Lower lobe of right lung (tissue), 2 donors: ENCODE measurements at regions of chr6 and their contacts with region 1.

Region 1: DNA sequence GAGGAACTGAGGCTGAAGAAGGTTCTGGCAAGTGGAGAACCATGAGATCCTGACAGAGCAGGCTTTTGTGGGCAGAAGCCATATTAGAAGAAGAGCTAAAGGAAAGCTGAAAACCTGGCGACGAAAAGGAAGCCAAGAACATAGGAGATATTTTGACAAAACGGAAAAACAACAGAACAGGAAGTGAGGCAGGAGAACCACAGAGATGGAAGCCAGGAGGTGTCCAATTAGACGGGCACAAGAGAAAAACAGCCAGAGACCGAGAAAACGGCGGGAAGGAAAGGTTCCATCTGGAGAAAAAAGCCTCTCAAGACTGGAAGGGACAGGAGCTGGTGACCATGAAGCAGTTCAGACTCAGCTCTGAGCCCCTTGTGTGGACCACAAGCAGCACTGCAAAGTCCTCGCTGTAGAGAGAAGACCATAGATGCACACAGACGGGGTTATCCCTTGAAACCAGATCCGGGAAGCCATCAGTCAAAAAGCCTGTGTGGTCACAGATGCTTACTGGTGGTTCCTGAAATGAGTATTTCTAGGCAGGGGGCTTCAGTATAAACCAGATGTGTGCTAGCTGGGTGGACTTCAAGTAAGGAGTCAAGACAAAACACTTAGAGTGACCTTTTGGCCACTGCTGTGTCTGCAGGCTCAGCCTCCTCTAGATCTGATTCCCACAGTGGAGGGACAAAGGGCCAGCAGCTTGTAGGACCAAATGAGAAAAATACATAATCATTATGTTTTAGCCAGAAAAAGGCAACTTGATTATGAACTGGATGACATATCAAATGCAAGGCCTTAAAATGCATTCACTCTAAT is 30.7 kb downstream of the SSR1 start:
- DNase-seq: no peak
- ATAC-seq: no peak
- H3K4me3 ChIP-seq: no peak overlapping the region
- H3K27ac ChIP-seq: no peak overlapping the region
- H3K4me1 ChIP-seq: peaks cover 6% of the 10 kb centered on the region
- H3K27me3 ChIP-seq: no peaks in the 10 kb centered on the region
- CTCF ChIP-seq: no peak

Region 2: DNA sequence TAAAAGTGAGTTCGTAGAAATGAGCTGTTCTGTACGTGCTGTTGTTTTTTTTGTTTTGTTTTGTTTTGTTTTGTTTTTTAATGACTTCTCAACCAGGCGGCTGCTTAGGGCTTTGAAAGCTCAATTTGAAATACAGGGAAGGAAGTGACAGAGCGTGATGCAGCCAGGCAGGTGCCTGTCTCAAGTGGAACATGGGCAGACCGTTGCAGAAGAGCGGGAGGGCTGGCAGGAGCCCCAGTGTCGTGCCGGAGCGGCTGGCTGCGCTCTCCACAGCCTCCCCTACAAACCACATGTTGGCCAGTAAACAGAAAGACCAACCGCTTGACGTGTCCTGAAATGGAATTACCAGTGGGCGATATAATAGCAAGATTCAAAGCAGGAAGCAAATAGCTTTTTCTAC is 339.5 kb before region 1 on chr6:
- intact Hi-C with region 1: no loop called
- DNase-seq: peak; percentile 78
- ATAC-seq: peak; percentile 88
- H3K4me3 ChIP-seq: no peak overlapping the region
- H3K27ac ChIP-seq: no peak overlapping the region
- H3K4me1 ChIP-seq: no peaks in the 10 kb centered on the region
- H3K27me3 ChIP-seq: no peaks in the 10 kb centered on the region
- CTCF ChIP-seq: no peak

Region 3: DNA sequence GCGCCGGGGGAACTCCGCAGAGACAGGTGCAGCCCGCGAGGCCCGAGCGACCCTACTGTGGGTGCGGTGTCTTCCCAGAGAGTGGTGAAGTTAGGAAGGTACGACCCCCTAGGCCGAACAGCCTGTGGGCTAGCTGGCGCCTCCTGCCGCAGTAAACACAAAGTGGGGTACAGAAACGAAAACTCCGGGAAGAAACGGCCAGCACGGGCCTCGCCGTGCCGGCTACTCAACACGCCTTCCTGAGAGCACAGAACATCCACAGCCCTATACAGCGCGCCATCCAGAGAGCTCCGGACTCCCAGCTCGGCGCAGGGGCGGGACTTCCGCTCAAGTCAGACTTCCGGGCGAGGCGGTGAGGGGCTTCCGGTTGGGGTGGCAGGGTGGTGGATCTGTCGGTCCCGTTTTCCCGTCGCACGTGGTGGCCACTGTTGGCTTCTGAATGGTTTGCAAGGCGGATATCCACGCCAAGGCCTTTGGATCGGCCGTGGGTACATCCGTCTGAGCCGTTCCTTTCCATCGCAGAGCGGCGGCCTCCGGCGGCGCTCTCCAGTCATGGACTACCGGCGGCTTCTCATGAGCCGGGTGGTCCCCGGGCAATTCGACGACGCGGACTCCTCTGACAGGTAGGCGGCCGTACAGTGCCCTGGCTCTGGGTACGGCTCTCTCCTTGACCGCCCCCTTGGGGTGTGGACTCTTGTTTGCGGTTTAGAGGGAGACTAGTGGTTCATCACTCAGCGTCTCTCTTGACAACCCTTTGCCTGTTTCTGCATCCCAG is 107.3 kb after region 1 on chr6 and contains the starts of genes CAGE1 and RIOK1:
- intact Hi-C with region 1: loop called (anchors 10 kb)
- DNase-seq: peak; percentile 97
- ATAC-seq: peak; percentile 99 to 100
- H3K4me3 ChIP-seq: peak within 1 kb of the TSS; percentile 76
- H3K27ac ChIP-seq: peak within 1 kb of the TSS; percentile 90
- H3K4me1 ChIP-seq: peaks cover 24% of the 10 kb centered on the region
- H3K27me3 ChIP-seq: no peaks in the 10 kb centered on the region
- CTCF ChIP-seq: no peak
- total RNA-seq, gene CAGE1: not detected
- total RNA-seq, gene RIOK1: 16.5 TPM